ENCODE measurements at regions of chr17 and their contacts with region 1.

Region 1: DNA sequence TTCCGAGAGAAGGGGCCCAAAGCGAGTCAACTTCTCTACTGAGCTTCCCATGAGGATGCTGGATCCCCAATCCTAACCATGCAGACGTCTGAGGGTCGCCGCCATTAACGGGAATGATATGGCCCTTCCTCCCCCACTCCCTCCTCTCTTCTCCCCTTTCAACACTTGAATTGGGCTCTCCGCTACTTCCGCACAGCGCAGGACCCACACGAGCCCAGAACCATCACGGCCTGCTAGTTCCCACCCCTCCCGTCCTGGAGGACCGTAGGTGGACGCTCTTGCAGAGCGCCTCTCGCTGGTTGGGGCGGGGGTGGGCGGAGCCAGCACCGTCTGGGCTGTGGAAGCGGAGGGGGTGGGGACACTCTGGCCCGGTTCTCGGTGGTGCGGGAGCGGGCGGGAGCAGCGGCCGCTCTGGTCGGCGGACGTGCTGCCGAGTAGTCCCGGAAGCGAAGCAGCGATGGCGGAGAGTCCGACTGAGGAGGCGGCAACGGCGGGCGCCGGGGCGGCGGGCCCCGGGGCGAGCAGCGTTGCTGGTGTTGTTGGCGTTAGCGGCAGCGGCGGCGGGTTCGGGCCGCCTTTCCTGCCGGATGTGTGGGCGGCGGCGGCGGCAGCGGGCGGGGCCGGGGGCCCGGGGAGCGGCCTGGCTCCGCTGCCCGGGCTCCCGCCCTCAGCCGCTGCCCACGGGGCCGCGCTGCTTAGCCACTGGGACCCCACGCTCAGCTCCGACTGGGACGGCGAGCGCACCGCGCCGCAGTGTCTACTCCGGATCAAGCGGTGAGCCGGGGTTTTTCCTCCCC is at the start of gene UBE2Z:
- DNase-seq: peak; percentile 93
- H3K4me3 Mint-ChIP-seq: peak within 1 kb of the TSS; percentile 87
- H3K27ac Mint-ChIP-seq: peak within 1 kb of the TSS; percentile 97
- H3K4me1 Mint-ChIP-seq: peaks cover 43% of the 10 kb centered on the region
- H3K27me3 Mint-ChIP-seq: no peaks in the 10 kb centered on the region
- total RNA-seq, gene UBE2Z: 102 to 109 TPM

Region 2: GRCh38 chr17:48843172-48843900 is 64.9 kb before region 1 on chr17:
- CTCF ChIA-PET with region 1: no interaction called
- POLR2A ChIA-PET with region 1: no interaction called
- intact Hi-C with region 1: no loop called
- DNase-seq: no peak
- H3K4me3 Mint-ChIP-seq: no peak overlapping the region
- H3K27ac Mint-ChIP-seq: no peak overlapping the region
- H3K4me1 Mint-ChIP-seq: peaks cover 31% of the 10 kb centered on the region
- H3K27me3 Mint-ChIP-seq: no peaks in the 10 kb centered on the region

Region 3: DNA sequence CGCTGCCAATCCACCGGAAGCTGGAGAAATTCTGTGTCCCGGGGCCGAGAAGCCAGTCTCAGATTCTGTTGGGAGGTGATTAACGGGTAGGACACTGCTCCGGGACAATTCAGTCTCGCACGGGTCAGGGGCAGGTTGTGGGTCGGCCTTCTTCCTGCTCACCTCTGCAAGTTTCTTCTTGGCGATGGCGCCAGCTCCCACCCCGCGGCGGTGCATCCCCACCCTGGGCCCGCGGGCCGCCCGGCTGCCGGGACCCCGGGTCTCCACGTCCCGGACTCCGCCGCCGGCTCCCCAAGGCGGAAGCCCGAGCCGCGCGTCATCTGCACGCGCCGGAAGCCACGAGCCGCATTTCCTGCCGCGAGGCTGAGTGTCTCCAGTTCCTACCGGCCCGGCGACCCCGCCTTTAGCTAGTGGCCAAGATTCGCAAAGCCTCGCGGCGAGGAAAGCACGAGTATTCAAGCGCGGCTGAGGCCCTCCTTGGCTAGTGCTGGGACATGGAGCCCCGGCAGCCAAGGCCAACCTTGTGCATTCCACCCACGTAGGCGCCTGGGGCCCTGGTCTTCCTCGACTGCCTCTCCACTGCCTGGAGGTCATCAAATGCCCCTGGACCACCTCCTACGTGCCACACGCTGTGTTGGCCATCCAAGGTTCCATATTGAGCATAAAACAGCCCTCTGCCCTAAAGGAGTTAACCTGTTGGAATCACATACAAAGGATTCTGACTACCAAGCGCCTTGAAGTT is 36.4 kb after region 1 on chr17 and contains the start of gene SNF8:
- CTCF ChIA-PET with region 1: no interaction called
- POLR2A ChIA-PET with region 1: interaction called, 14 read pairs
- intact Hi-C with region 1: no loop called
- DNase-seq: peak; percentile 96
- H3K4me3 Mint-ChIP-seq: peak within 1 kb of the TSS; percentile 99
- H3K27ac Mint-ChIP-seq: peak within 1 kb of the TSS; percentile 88
- H3K4me1 Mint-ChIP-seq: peaks cover 14% of the 10 kb centered on the region
- H3K27me3 Mint-ChIP-seq: no peaks in the 10 kb centered on the region
- total RNA-seq, gene SNF8: 93.5 to 105 TPM